ENCODE measurements at regions of chr2 and their contacts with region 1.

Region 1: DNA sequence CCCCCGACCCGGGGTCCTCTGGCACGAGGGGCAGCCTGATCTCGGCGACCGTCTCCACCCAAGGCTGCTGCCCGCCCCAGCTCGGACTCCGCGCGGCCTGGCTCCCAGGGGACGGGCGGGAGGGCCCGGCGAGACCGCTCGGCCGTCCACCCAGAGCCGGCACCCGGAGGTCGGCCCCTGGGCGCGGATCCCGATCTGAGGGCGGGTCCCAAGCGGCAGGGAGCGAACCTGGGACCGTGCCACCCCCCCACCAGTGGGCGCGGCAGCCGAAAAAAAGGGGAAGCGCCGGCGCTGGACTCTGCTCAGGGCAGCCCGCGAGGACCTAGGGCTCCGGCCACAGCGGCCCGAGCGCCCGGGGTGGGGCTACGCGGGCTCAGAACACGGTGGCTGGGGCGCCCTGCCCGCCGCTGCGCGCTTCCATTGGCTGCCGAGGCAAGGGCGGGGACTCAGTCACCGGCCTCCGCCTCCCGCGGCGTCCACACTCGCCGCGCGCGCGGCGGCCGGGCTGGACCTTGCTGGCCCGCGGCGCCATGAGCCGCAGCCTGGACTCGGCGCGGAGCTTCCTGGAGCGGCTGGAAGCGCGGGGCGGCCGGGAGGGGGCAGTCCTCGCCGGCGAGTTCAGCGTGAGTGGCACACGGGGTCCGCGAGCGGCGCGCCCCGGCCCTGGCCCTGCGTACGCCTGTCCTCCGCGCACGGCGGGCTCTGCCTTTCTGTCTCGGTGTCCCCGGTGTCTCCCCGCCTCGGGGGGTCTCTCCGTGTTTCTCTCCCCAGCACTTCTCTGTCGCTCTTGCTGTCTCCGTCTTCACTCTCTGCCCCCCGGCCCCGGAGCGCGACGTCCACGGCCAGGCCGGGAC is at the start of gene PTPN18:
- DNase-seq: peak; percentile 85
- ATAC-seq: peak; percentile 99
- H3K4me3 ChIP-seq: peak within 1 kb of the TSS; percentile 71
- H3K27ac ChIP-seq: peak within 1 kb of the TSS; percentile 6; the same call in 1 of the 2 replicates
- H3K4me1 ChIP-seq: no peaks in the 10 kb centered on the region; the same call in 1 of the 2 replicates
- H3K27me3 ChIP-seq: no peaks in the 10 kb centered on the region
- CTCF ChIP-seq: peak; percentile 63
- POLR2A ChIP-seq: peak; percentile 72; the same call in 1 of the 2 replicates
- RAD21 ChIP-seq: peak; percentile 61
- total RNA-seq, gene PTPN18: 7.2 and 9.7 TPM in 2 replicates

Region 2: GRCh38 chr2:129877289-129877779 is 478.5 kb before region 1 on chr2:
- CTCF ChIA-PET with region 1: no interaction called
- POLR2A ChIA-PET with region 1: no interaction called
- dilution Hi-C with region 1: no loop called
- in situ Hi-C with region 1: no loop called
- intact Hi-C with region 1: no loop called
- DNase-seq: peak; percentile 61
- ATAC-seq: peak; percentile 96
- H3K4me3 ChIP-seq: peak overlapping the region; percentile 58
- H3K27ac ChIP-seq: no peak overlapping the region
- H3K4me1 ChIP-seq: no peaks in the 10 kb centered on the region
- H3K27me3 ChIP-seq: no peaks in the 10 kb centered on the region
- CTCF ChIP-seq: no peak
- POLR2A ChIP-seq: no peak
- RAD21 ChIP-seq: no peak

Region 3: DNA sequence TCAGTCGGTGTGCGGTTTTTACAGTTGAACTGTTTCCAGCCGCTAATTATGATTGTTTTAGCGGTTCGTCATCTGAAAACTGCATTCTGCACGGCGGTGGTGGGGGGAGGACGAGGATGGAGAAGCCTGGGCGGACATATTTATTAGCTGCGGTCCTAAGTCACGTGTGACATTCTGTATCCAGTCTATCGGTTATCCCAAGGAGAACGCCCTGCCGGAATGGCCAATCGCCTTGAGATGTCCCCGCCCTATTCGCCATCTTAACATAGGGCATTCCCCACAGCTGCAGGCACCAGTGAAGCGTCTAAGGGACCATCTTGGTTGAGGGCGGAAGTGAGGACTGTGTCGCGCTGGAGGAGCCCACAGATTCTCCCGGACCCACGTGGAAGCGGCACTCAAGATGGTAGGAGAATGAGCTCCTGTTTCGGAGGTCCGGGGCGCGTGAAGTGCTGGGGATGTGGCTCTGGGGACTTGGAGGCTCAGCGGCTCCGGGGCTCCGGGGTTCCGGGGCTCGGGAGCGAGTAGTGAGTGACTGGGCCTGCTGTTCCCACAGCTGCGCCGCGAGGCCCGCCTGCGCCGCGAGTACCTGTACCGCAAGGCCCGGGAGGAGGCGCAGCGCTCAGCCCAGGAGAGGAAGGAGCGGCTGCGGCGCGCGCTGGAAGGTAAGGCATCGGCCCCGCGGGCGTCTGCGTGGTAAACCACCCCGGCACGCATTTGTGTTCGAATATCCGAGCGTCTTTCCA is 13.1 kb before region 1 on chr2 and contains the start of gene IMP4:
- CTCF ChIA-PET with region 1: interaction called, 8 read pairs
- POLR2A ChIA-PET with region 1: interaction called, 3 read pairs
- dilution Hi-C with region 1: no loop called
- in situ Hi-C with region 1: no loop called
- intact Hi-C with region 1: loop called (anchors 1 kb)
- DNase-seq: peak; percentile 100
- ATAC-seq: peak; percentile 92
- H3K4me3 ChIP-seq: peak within 1 kb of the TSS; percentile 96
- H3K27ac ChIP-seq: peak within 1 kb of the TSS; percentile 79
- H3K4me1 ChIP-seq: peaks cover 6% of the 10 kb centered on the region
- H3K27me3 ChIP-seq: no peaks in the 10 kb centered on the region
- CTCF ChIP-seq: peak; percentile 25
- POLR2A ChIP-seq: peak; percentile 55; the same call in 1 of the 2 replicates
- RAD21 ChIP-seq: 0 out of 2 replicates have a peak, but pooled peaks have one; percentile 27
- total RNA-seq, gene IMP4: 127 and 154 TPM in 2 replicates

Region 4: DNA sequence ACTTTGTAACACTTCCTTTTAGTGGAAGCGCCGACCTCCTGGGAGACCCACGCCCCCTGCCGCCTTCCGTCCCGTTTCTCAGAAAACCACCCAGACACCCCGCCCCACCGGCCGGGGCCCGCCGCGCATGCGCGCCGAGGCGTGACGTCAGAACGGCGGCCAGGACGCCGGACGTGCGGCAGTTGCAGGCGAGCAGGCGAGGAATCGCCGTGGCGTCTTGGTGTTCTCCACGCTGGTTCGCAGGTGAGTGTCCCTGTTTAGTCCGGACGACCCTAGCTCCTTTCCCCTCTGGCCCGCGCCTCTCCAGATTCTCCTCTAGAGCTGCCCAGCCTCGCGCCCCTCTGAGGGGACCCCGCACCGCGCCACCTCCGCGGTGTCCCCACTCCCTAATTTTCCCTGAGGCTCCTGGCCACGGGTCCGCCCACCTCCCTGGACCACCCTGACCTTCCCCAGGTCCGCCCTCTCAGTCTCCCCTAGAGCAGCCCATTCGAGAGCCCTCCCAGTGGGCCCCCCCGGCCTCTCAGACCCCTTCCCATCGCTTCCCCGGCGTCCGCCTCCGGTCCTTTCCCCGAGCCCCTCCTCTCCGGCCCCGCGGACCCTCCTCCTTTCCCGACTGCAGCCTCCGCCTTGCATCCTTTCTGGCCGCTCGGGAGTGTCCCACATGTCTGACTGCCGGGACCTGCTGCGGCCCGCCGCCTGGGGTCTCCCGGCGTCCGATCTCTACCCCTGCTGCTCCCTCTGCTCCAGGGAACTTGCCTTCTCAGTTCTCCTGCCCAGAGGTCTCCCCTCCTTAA is 749.5 kb after region 1 on chr2 and contains the start of gene PLEKHB2:
- CTCF ChIA-PET with region 1: no interaction called
- POLR2A ChIA-PET with region 1: no interaction called
- dilution Hi-C with region 1: no loop called
- in situ Hi-C with region 1: loop called (anchors 25 kb)
- intact Hi-C with region 1: no loop called
- DNase-seq: peak; percentile 86
- ATAC-seq: peak; percentile 83
- H3K4me3 ChIP-seq: peak within 1 kb of the TSS; percentile 68
- H3K27ac ChIP-seq: peak within 1 kb of the TSS; percentile 48
- H3K4me1 ChIP-seq: peaks cover 5% of the 10 kb centered on the region
- H3K27me3 ChIP-seq: no peaks in the 10 kb centered on the region
- CTCF ChIP-seq: peak; percentile 29; the same call in 1 of the 2 replicates
- POLR2A ChIP-seq: peak; percentile 95
- RAD21 ChIP-seq: no peak
- total RNA-seq, gene PLEKHB2: 82.1 and 118 TPM in 2 replicates